ENCODE measurements at regions of chr9 and their contacts with region 1.

Region 1: DNA sequence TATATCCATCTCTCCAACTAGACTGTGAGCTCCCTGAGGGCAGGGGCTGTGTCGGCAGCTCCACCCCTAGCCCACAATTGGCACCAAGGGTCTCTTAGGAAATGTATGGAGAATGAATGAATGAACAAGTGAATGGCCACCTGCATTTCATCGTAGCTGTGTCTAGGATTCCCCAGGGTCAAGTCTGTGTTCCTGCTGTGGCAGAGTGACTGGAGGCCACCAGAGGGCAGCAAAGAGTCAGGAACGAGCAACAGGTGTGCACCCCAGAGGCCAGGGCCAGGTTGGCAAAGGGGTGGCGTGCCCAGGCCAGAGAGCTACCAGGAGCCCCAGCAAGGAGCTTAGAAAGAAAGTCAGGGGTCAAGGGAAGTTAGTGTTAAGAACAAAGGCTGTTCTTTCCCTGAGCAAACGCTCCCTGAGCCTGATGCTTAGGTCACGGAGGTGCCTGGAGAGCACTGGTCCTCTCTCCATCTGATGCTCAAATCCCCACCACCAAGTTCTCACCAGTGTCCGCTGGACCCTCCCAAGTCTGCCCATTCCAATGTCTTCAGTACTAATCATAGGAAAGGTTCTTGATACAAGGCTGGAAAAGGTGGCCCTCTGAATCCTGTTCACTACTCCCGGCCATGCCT is 160.7 kb downstream of the PAX5 start:
- DNase-seq: peak; percentile 46 to 83 (median 73)
- ATAC-seq: peak; percentile 57
- H3K4me3 ChIP-seq: no peak overlapping the region
- H3K4me3 Mint-ChIP-seq: no peak overlapping the region
- H3K27ac ChIP-seq: no peak overlapping the region
- H3K27ac Mint-ChIP-seq: no peak overlapping the region
- H3K4me1 ChIP-seq: no peaks in the 10 kb centered on the region
- H3K4me1 Mint-ChIP-seq: no peaks in the 10 kb centered on the region
- H3K27me3 ChIP-seq: no peaks in the 10 kb centered on the region
- H3K27me3 Mint-ChIP-seq: peaks cover 10% of the 10 kb centered on the region
- CTCF ChIP-seq: peak; percentile 84

Region 2: DNA sequence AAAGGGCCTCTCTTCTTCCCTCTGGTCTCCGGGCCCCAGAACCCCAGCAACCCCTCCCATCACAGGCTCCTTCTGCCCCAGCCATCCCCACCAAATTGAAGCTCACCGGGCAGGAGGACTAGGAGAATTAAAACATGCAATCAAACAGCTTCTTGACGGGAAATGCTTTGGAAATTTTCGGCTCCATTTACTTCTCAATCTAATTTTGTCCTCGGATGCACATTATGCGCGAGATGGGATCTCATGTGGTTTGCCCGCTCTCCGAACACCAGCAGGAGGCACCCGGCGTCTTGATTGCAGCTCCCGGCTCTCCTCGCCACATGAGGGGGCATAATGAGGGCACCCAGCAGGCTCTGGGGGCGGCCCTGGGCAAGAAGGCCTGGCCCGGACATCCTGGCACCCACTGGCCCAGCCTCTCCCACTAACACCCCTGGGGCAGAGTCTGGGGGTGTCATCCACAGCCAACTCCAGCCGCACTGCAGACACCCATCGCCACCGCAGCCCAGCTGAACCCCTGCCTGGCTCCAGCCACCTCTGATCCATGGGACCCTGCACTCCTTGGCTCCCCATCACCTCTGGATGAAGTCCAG is 25.2 kb after region 1 on chr9:
- CTCF ChIA-PET with region 1: interaction called, 12 read pairs
- POLR2A ChIA-PET with region 1: no interaction called
- intact Hi-C with region 1: no loop called
- DNase-seq: no peak
- ATAC-seq: no peak
- H3K4me3 ChIP-seq: no peak overlapping the region
- H3K4me3 Mint-ChIP-seq: no peak overlapping the region
- H3K27ac ChIP-seq: no peak overlapping the region
- H3K27ac Mint-ChIP-seq: no peak overlapping the region
- H3K4me1 ChIP-seq: no peaks in the 10 kb centered on the region
- H3K4me1 Mint-ChIP-seq: no peaks in the 10 kb centered on the region
- H3K27me3 ChIP-seq: no peaks in the 10 kb centered on the region
- H3K27me3 Mint-ChIP-seq: peaks cover 7% of the 10 kb centered on the region
- CTCF ChIP-seq: no peak

Region 3: DNA sequence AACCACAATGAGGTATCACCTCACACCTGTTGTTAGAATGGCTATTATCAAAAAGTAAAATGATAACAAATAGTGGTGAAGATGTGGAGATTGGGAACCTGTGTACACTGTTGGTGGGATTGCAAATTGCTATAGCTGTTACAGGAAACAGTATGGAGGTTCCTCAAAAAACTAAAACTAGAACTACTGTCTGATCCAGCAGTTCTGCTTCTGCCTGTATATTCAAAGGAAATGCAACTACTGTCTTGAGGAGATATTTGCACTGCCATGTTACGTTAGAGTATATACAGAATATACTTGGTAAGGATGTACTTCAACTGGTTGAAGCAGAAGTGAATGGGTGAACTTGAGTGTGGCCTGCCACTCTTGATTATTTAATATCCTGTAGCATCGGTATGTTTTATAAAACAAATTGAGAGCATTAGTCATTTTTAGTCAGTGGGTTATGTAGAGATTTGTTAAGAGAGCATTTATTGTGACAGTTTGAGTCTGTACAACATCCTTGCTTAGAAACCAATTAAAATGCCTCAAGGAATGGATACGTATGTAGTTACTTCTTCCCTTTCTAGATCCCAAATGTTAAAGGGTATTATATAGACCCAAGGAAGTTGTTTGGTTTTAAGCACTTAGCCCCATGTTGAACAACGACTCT is 284.5 kb after region 1 on chr9:
- CTCF ChIA-PET with region 1: no interaction called
- POLR2A ChIA-PET with region 1: no interaction called
- intact Hi-C with region 1: no loop called
- DNase-seq: no peak
- ATAC-seq: no peak
- H3K4me3 ChIP-seq: no peak overlapping the region
- H3K4me3 Mint-ChIP-seq: no peak overlapping the region
- H3K27ac ChIP-seq: no peak overlapping the region
- H3K27ac Mint-ChIP-seq: no peak overlapping the region
- H3K4me1 ChIP-seq: no peaks in the 10 kb centered on the region
- H3K4me1 Mint-ChIP-seq: peaks cover 24% of the 10 kb centered on the region
- H3K27me3 ChIP-seq: no peaks in the 10 kb centered on the region
- H3K27me3 Mint-ChIP-seq: no peaks in the 10 kb centered on the region
- CTCF ChIP-seq: no peak

Region 4: GRCh38 chr9:37309136-37309535 is 435.8 kb after region 1 on chr9:
- CTCF ChIA-PET with region 1: interaction called, 7 read pairs
- POLR2A ChIA-PET with region 1: no interaction called
- intact Hi-C with region 1: loop called in 1 of 2 experiments (anchors 2 kb)
- DNase-seq: peak in 3 of 9 experiments; percentile 8 to 38 (median 24)
- ATAC-seq: no peak
- H3K4me3 ChIP-seq: no peak overlapping the region
- H3K4me3 Mint-ChIP-seq: no peak overlapping the region
- H3K27ac ChIP-seq: no peak overlapping the region
- H3K27ac Mint-ChIP-seq: no peak overlapping the region
- H3K4me1 ChIP-seq: no peaks in the 10 kb centered on the region
- H3K4me1 Mint-ChIP-seq: peaks cover 8% of the 10 kb centered on the region
- H3K27me3 ChIP-seq: no peaks in the 10 kb centered on the region
- H3K27me3 Mint-ChIP-seq: no peaks in the 10 kb centered on the region
- CTCF ChIP-seq: no peak

Region 5: GRCh38 chr9:37329576-37329975 is 456.2 kb after region 1 on chr9:
- CTCF ChIA-PET with region 1: interaction called, 13 read pairs
- POLR2A ChIA-PET with region 1: no interaction called
- intact Hi-C with region 1: loop called (anchors 1 to 5 kb)
- DNase-seq: peak in 2 of 9 experiments; percentile 40 to 58
- ATAC-seq: no peak
- H3K4me3 ChIP-seq: no peak overlapping the region
- H3K4me3 Mint-ChIP-seq: no peak overlapping the region
- H3K27ac ChIP-seq: no peak overlapping the region
- H3K27ac Mint-ChIP-seq: no peak overlapping the region
- H3K4me1 ChIP-seq: no peaks in the 10 kb centered on the region
- H3K4me1 Mint-ChIP-seq: peaks cover 3% of the 10 kb centered on the region
- H3K27me3 ChIP-seq: no peaks in the 10 kb centered on the region
- H3K27me3 Mint-ChIP-seq: no peaks in the 10 kb centered on the region
- CTCF ChIP-seq: peak; percentile 47

Region 6: DNA sequence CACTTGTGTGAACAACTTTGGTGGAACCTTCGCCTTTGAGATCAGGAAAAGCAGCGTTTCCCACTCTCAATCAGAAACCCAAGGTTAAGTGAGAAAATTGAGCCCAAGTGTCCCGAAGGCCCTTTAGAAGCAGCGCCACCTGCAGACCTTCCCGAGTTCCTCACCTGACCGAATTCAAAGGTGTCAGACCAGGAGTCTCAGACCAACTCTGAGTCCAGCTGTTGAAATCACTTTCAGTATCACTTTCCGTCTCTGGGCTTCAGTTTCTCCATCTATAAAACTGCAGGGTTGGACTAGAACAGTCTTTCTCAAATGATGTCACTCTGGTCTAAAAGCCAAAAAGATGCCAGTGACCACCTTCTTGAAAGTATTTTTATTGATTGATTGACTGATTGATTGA is 517.4 kb after region 1 on chr9:
- CTCF ChIA-PET with region 1: interaction called, 5 read pairs
- POLR2A ChIA-PET with region 1: no interaction called
- intact Hi-C with region 1: loop called in 1 of 2 experiments (anchors 1 kb)
- DNase-seq: peak in 4 of 9 experiments; percentile 15 to 51 (median 32)
- ATAC-seq: no peak
- H3K4me3 ChIP-seq: no peak overlapping the region
- H3K4me3 Mint-ChIP-seq: no peak overlapping the region
- H3K27ac ChIP-seq: no peak overlapping the region
- H3K27ac Mint-ChIP-seq: no peak overlapping the region
- H3K4me1 ChIP-seq: no peaks in the 10 kb centered on the region
- H3K4me1 Mint-ChIP-seq: peaks cover 3% of the 10 kb centered on the region
- H3K27me3 ChIP-seq: no peaks in the 10 kb centered on the region
- H3K27me3 Mint-ChIP-seq: no peaks in the 10 kb centered on the region
- CTCF ChIP-seq: peak; percentile 18